GM13977 (cell line): ENCODE measurements at regions of chr6 and their contacts with region 1.

Region 1: GRCh38 chr6:70107852-70108629 is 194.8 kb downstream of the COL9A1 start:
- DNase-seq: peak; percentile 37
- CTCF ChIP-seq: peak; percentile 65

Region 2: DNA sequence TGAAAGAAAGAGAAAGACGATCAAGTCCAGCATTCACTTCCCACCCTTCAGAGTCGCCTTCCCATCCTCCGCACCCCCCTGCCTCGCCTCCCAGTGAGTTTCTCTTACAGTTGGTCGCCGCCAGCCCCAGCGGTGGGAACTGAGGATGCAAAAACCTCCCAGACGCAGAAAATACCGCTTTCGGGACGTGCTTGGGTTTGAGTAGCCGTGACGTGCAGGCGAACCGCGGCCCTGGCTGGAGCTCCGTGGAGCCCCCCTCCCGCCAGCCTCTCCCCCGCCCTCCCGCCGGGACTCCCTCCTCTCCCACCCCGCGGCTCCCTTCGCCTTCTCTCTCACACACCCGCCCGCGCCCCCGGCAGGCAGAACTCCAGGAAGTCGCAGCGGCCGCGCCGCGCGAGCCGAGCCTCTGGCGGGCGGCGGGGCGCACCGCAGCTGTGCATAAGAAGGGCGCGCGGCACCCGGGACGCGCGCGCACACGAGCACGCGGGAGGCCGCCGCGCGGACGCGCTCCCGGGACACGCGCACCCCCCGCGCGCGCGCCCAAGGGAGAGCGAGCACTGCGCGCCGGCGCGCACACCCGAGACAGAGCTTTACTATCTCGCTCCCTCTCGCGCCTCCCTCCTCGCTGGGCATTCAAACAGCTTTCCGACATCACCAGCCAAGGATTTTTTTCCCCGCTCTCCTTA is 1473.2 kb before region 1 on chr6 and contains the start of gene ADGRB3:
- in situ Hi-C with region 1: loop called (anchors 25 kb)
- DNase-seq: peak; percentile 77
- CTCF ChIP-seq: no peak

Region 3: GRCh38 chr6:69678834-69679233 is 429.2 kb before region 1 on chr6:
- in situ Hi-C with region 1: no loop called
- DNase-seq: no peak
- CTCF ChIP-seq: no peak

Region 4: GRCh38 chr6:69835414-69836179 is 272.4 kb before region 1 on chr6:
- in situ Hi-C with region 1: loop called (anchors 25 kb)
- DNase-seq: peak; percentile 22
- CTCF ChIP-seq: peak; percentile 80

Region 5: GRCh38 chr6:70489393-70489792 is 381.4 kb after region 1 on chr6:
- in situ Hi-C with region 1: no loop called
- DNase-seq: no peak
- CTCF ChIP-seq: no peak